RWPE1 (cell line): ENCODE measurements at regions of chr13 and their contacts with region 1.

Region 1: GRCh38 chr13:73000027-73000674 is 58.7 kb upstream of the KLF5 start:
- DNase-seq: no peak
- H3K27ac ChIP-seq: no peak overlapping the region
- CTCF ChIP-seq: no peak

Region 2: DNA sequence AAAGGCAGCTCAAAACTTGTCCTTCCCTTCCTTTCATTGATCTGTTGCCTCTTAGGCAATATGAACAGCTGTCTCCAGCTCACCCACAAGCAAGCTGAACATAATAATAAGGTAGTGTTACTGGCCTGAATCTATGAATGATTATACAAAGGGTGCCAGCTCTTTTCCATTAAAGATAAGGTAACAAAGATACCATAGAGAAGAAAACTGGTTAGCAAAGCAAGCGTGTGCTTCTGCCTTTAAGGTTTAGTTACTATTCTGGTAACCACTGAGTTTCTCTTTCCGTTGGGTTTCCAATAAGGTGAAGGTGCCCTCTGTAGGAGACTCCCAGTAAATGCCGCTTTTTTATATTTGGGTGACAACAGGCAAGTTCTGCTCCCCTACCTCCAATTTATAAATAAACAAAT is 1121.0 kb before region 1 on chr13:
- CTCF ChIA-PET with region 1: interaction called, 10 read pairs
- POLR2A ChIA-PET with region 1: no interaction called
- DNase-seq: no peak
- H3K27ac ChIP-seq: no peak overlapping the region
- CTCF ChIP-seq: peak; percentile 37

Region 3: DNA sequence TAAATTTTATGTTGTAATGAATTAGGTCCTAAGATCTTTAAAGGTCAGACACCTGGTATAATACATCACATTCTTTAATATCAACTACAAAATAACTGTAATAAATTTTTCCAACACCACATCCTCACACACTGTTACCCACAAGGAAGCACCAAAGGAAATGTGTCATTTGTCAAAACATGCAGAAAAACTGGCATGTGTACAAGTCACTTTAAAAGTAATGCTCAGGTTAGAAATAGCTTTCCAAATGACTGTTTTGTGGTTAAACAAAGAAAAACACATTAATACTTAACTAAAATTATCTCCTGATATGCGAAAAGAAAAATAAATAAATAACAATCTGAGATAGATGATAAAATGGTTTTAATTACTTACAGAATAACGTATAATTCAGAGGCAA is 347.5 kb before region 1 on chr13:
- CTCF ChIA-PET with region 1: no interaction called
- POLR2A ChIA-PET with region 1: no interaction called
- DNase-seq: no peak
- H3K27ac ChIP-seq: no peak overlapping the region
- CTCF ChIP-seq: no peak

Region 4: DNA sequence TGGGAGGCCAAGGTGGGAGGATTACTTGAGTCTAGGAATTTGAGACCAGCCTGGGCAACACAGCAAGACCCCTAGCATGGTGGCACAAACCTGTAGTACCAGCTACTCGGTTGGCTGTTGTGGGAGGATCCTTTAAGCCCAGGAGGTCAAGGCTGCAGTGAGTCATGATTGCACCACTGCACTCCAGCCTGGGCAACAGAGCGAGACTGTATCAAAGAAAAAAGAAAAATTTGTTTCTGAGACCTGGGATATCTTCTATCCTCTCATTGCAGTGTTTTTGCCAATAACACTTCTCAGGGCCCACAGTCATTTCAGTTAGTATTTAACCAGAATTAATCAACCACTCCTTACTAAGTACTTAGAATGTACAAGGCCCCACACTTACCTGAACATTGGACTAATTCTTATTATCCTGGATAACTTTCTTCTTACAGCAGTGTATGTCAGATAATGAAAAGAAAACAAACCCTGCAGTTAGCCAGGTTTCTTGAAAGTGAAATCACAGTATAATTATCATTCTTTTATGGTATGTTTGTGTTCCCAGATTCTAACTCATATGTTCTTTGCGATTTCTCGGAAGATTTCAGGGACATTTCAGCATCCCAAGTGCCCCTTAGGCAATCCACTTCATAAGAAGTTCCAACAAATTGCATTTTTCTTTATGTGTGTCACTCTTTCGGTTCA is 16.9 kb before region 1 on chr13:
- CTCF ChIA-PET with region 1: interaction called, 10 read pairs
- POLR2A ChIA-PET with region 1: no interaction called
- DNase-seq: no peak
- H3K27ac ChIP-seq: peak overlapping the region; percentile 50
- CTCF ChIP-seq: no peak